A549 (cell line): ENCODE measurements at regions of chr17 and their contacts with region 1.

Region 1: GRCh38 chr17:17356149-17356930 is 53.2 kb downstream of the NT5M start:
- DNase-seq: peak; percentile 91 to 96
- ATAC-seq: peak; percentile 86 to 91
- H3K4me3 ChIP-seq: no peak overlapping the region
- H3K27ac ChIP-seq: peak overlapping the region; percentile 55 to 63
- H3K4me1 ChIP-seq: no peaks in the 10 kb centered on the region
- CTCF ChIP-seq: peak; percentile 100
- EP300 ChIP-seq: no peak
- POLR2A ChIP-seq: no peak
- RAD21 ChIP-seq: peak; percentile 100

Region 2: DNA sequence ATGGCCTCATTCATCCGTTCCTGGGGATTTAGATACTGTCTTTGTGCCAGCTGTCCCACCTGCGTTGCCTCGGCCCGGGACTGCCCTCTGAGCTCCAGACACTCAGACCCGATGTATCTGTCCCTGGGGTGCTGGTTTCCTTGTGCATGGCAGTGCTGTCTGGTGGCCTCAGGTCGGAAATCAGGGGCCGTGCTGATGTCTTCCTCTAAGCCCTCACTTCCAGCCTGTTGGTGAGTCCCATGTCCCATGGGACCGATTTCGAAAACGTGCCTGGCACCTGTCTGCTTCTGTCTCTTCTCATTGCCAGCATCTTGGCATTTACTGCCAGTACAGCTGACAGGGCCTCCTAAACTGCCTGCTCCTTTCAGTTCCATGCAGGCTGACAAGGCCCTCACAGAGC is 31.1 kb before region 1 on chr17:
- CTCF ChIA-PET with region 1: interaction called, 15 read pairs
- POLR2A ChIA-PET with region 1: no interaction called
- DNase-seq: no peak
- ATAC-seq: no peak
- H3K4me3 ChIP-seq: no peak overlapping the region
- H3K27ac ChIP-seq: no peak overlapping the region
- H3K4me1 ChIP-seq: no peaks in the 10 kb centered on the region
- CTCF ChIP-seq: no peak
- EP300 ChIP-seq: no peak
- POLR2A ChIP-seq: no peak
- RAD21 ChIP-seq: no peak

Region 3: DNA sequence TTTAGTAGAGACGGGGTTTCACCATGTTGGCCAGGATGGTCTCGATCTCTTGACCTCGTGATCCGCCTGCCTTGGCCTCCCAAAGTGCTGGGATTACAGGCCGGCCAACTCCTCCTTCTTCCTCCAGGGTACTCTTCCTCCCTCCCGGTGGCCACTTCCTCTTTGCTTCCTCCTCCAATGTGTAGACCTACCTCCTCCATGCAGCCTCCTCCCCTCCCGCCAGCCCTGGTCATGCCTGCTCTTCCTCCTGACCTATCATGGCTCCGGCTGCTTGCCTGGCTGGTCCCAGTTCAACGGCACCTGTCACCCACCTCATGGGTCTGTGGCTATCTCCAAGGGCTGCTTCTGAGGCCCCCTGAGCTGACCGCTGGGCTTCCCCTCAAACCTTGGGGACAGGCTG is 53.2 kb after region 1 on chr17:
- CTCF ChIA-PET with region 1: interaction called, 11 read pairs
- POLR2A ChIA-PET with region 1: no interaction called
- DNase-seq: no peak
- ATAC-seq: no peak
- H3K4me3 ChIP-seq: no peak overlapping the region
- H3K27ac ChIP-seq: no peak overlapping the region; a peak in 1 of 6 replicates
- H3K4me1 ChIP-seq: peaks cover 6% of the 10 kb centered on the region; the same call in 1 of the 3 replicates
- CTCF ChIP-seq: no peak
- EP300 ChIP-seq: no peak
- POLR2A ChIP-seq: no peak
- RAD21 ChIP-seq: no peak

Region 4: GRCh38 chr17:17467720-17468119 is 111.4 kb after region 1 on chr17:
- CTCF ChIA-PET with region 1: interaction called, 24 read pairs
- POLR2A ChIA-PET with region 1: no interaction called
- DNase-seq: peak in 1 of 2 experiments; percentile 29
- ATAC-seq: peak; percentile 31 to 34; a peak in 3 of 6 replicates
- H3K4me3 ChIP-seq: no peak overlapping the region
- H3K27ac ChIP-seq: no peak overlapping the region
- H3K4me1 ChIP-seq: 0 out of 3 replicates have a peak, but pooled peaks cover 5% of the 10 kb centered on the region
- CTCF ChIP-seq: no peak
- EP300 ChIP-seq: no peak
- POLR2A ChIP-seq: no peak
- RAD21 ChIP-seq: no peak

Region 5: DNA sequence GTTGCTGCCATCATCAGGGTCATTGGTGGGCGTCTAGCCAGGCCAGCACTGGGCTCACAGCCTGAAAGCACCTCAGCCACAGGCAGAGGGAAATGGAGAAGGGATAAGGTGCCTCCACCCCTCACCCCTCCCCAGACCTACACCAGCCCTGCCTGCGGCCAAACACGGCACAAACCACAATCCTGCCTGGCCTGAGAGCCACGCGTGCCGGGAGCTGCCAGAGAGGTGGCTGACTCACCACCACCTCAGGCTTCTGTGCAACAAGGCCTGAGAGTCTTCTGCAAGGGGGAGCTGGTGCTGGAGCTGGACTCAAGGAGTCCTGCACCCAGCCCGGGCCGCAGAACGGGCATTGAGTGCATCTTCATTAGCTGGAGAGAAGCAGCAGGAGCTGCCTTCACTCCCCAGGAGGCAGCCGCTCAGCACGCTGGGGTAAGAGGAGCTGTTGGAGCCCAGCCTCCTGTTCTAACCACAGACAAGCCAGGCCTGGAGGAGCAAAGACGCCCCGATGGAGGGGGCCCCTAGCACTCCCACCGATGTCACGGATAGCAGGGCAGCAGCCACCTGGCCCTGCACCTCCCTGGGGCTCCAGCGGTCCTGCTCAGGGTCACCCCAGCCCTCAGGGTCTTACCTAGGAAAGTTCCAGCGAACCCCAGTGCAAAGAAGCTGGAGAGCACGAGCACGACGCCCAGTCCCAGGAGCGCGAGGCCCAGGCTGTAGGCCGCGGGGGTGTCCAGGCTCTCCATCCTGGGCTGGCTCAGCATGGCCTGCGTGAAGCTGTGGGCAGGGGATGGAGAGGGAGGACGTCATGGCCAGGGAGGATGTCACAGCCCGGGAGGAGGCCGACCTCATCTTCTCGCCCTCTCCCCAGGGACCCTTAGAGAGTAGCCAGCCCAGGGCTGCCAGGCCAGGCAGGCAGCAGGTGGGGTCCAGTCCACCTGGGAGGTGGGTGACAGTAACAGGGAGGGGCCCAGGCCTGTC is 155.8 kb after region 1 on chr17:
- CTCF ChIA-PET with region 1: interaction called, 24 read pairs
- POLR2A ChIA-PET with region 1: no interaction called
- DNase-seq: peak; percentile 39 to 54
- ATAC-seq: peak; percentile 31 to 62; a peak in 3 of 6 replicates
- H3K4me3 ChIP-seq: no peak overlapping the region
- H3K27ac ChIP-seq: peak overlapping the region in 1 of 2 experiments; percentile 45; a peak in 3 of 6 replicates
- H3K4me1 ChIP-seq: peaks cover 15% of the 10 kb centered on the region
- CTCF ChIP-seq: no peak
- EP300 ChIP-seq: no peak
- POLR2A ChIP-seq: no peak
- RAD21 ChIP-seq: no peak

Region 6: GRCh38 chr17:17580662-17581470 is 224.5 kb after region 1 on chr17:
- CTCF ChIA-PET with region 1: interaction called, 20 read pairs
- POLR2A ChIA-PET with region 1: no interaction called
- DNase-seq: no peak
- ATAC-seq: peak; percentile 31 to 68; a peak in 5 of 6 replicates
- H3K4me3 ChIP-seq: no peak overlapping the region
- H3K27ac ChIP-seq: peak overlapping the region in 1 of 2 experiments; percentile 40; a peak in 3 of 6 replicates
- H3K4me1 ChIP-seq: peaks cover 10% of the 10 kb centered on the region
- CTCF ChIP-seq: no peak
- EP300 ChIP-seq: no peak
- POLR2A ChIP-seq: no peak
- RAD21 ChIP-seq: no peak

Region 7: DNA sequence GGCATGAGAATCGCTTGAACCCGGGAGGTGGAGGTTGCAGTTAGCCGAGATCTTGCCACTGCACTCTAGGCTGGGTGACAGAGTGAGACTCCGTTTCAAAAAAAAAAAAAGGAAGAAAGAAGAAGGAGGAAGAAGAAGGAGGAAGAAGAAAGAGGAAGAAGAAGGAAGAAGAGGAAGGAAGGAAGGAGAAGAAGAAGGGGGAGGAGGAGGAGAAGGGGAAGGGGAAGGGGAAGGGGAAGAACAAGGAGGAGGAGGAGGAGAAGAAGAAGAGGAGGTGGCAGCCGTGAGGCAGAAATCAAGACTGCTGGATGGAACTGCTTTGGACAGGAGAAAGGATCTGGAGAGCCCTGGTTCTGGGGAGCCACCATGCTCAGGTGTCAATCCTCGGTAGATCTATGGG is 264.9 kb after region 1 on chr17:
- CTCF ChIA-PET with region 1: interaction called, 76 read pairs
- POLR2A ChIA-PET with region 1: no interaction called
- DNase-seq: no peak
- ATAC-seq: 0 out of 6 replicates have a peak, but pooled peaks of 1 of the 2 experiments have one; percentile 40
- H3K4me3 ChIP-seq: no peak overlapping the region
- H3K27ac ChIP-seq: no peak overlapping the region
- H3K4me1 ChIP-seq: no peaks in the 10 kb centered on the region
- CTCF ChIP-seq: no peak
- EP300 ChIP-seq: no peak
- POLR2A ChIP-seq: no peak
- RAD21 ChIP-seq: no peak